AG04450 (cell line): ENCODE measurements at regions of chr1 and their contacts with region 1.

Region 1: GRCh38 chr1:186212544-186213226 is 162.4 kb downstream of the TPR start:
- DNase-seq: peak; percentile 94
- H3K4me3 ChIP-seq: no peak overlapping the region
- H3K27ac ChIP-seq: no peak overlapping the region
- H3K27me3 ChIP-seq: no peaks in the 10 kb centered on the region
- CTCF ChIP-seq: peak; percentile 94

Region 2: GRCh38 chr1:185813401-185813979 is 399.2 kb before region 1 on chr1:
- CTCF ChIA-PET with region 1: interaction called, 23 read pairs
- POLR2A ChIA-PET with region 1: no interaction called
- DNase-seq: no peak
- H3K4me3 ChIP-seq: no peak overlapping the region
- H3K27ac ChIP-seq: no peak overlapping the region
- H3K27me3 ChIP-seq: no peaks in the 10 kb centered on the region
- CTCF ChIP-seq: peak; percentile 69

Region 3: GRCh38 chr1:186155594-186155993 is 57.1 kb before region 1 on chr1:
- CTCF ChIA-PET with region 1: interaction called, 15 read pairs
- POLR2A ChIA-PET with region 1: no interaction called
- DNase-seq: peak; percentile 34
- H3K4me3 ChIP-seq: no peak overlapping the region
- H3K27ac ChIP-seq: no peak overlapping the region
- H3K27me3 ChIP-seq: no peaks in the 10 kb centered on the region
- CTCF ChIP-seq: peak; percentile 80